Mammary epithelial cell (primary cell): ENCODE measurements at regions of chr1 and their contacts with region 1.

Region 1: DNA sequence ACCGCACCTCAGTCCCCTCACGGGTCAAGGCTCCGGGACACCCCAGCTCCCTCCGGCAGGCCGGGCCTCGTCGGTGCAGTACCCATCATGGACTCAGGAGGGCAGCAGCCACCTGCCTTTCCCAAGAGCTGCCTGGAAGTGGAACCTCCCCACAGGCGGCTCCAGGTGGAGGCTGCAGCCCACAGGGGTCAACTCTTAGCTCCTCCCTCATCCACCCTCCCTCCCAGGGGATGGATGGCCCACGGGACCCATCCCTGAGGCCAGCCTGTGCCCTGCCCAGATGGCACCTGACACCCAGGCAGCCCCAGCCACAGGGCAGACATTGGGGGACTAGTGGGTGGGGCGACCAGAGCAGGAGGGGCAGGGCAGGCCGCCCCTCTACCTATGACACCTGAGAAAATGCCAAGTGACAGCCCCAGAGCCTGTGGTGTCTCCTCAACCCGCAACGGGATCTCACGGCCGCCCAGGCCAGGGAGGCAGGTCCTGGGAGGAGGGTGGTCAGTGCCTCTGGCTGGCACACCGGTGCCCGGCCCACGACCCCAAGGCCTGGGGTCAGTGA is 1.2 kb upstream of the ARHGEF16 start:
- DNase-seq: peak; percentile 56
- H3K4me3 ChIP-seq: no peak overlapping the region
- H3K27ac ChIP-seq: no peak overlapping the region
- H3K4me1 ChIP-seq: peaks cover 11% of the 10 kb centered on the region
- H3K27me3 ChIP-seq: no peaks in the 10 kb centered on the region
- CTCF ChIP-seq: peak; percentile 80 to 97

Region 2: GRCh38 chr1:3483801-3484444 is 30.6 kb after region 1 on chr1:
- CTCF ChIA-PET with region 1: interaction called, 23 read pairs
- dilution Hi-C with region 1: no loop called
- in situ Hi-C with region 1: loop called (anchors 5 kb)
- intact Hi-C with region 1: loop called (anchors 1 kb)
- DNase-seq: no peak
- H3K4me3 ChIP-seq: no peak overlapping the region
- H3K27ac ChIP-seq: no peak overlapping the region
- H3K4me1 ChIP-seq: peaks cover 16% of the 10 kb centered on the region
- H3K27me3 ChIP-seq: no peaks in the 10 kb centered on the region
- CTCF ChIP-seq: peak; percentile 82 to 97

Region 3: DNA sequence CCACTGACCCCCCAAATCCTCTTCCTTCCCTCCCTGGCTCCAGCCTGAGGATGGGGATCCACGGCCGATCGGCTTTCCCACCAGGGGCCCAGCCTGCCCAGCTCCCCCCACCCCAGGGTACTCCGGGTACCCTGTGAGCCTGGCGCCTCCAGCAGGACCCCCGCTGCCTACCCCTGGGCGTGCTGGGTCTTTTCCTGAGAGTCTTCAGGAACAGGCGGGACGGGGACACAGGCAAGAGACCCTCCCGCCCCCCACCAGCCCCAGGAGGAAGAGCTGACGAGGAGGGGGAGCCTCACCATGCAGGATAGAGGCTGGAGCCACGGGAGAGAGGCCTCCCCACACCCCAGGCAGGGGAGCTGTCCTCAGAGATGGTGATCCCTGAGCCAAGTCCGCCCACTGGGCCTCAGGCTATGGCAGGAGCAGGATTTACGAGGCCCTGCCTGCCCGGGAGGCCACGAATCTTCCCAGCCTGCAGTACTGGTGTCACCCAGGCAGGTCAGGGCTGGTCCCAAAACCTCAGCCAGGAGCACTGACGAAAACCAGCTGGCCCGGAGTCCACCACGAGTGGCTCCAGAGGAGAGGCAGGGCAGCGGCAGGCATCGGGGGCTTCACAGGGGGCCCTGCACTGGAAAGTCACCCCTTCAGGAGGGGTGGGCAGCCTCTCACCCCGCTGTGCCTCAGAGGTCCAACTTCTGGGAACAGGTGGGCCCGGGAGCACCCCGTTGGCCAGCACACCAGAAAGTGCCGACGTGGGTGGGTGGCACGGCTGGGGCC is 100.1 kb after region 1 on chr1:
- CTCF ChIA-PET with region 1: no interaction called
- dilution Hi-C with region 1: loop called (anchors 5 kb)
- in situ Hi-C with region 1: no loop called
- intact Hi-C with region 1: no loop called
- DNase-seq: peak; percentile 81
- H3K4me3 ChIP-seq: peak overlapping the region in 1 of 3 experiments; percentile 10
- H3K27ac ChIP-seq: no peak overlapping the region
- H3K4me1 ChIP-seq: peaks cover 30% of the 10 kb centered on the region
- H3K27me3 ChIP-seq: peaks cover 14% of the 10 kb centered on the region
- CTCF ChIP-seq: no peak

Region 4: GRCh38 chr1:3624200-3625136 is 171.2 kb after region 1 on chr1 and contains the start of gene TPRG1L:
- CTCF ChIA-PET with region 1: interaction called, 6 read pairs
- dilution Hi-C with region 1: no loop called
- in situ Hi-C with region 1: loop called in 1 of 2 experiments (anchors 10 kb)
- intact Hi-C with region 1: loop called (anchors 1 kb)
- DNase-seq: peak; percentile 94
- H3K4me3 ChIP-seq: peak within 1 kb of the TSS; percentile 75 to 100 (median 77)
- H3K27ac ChIP-seq: no peak within 1 kb of the TSS
- H3K4me1 ChIP-seq: peaks cover 18% of the 10 kb centered on the region
- H3K27me3 ChIP-seq: no peaks in the 10 kb centered on the region
- CTCF ChIP-seq: no peak
- total RNA-seq, gene TPRG1L: 44.2 to 48.6 TPM

Region 5: GRCh38 chr1:3740042-3740441 is 286.8 kb after region 1 on chr1:
- CTCF ChIA-PET with region 1: no interaction called
- dilution Hi-C with region 1: loop called (anchors 5 kb)
- in situ Hi-C with region 1: no loop called
- intact Hi-C with region 1: no loop called
- DNase-seq: no peak
- H3K4me3 ChIP-seq: no peak overlapping the region
- H3K27ac ChIP-seq: no peak overlapping the region
- H3K4me1 ChIP-seq: no peaks in the 10 kb centered on the region
- H3K27me3 ChIP-seq: no peaks in the 10 kb centered on the region
- CTCF ChIP-seq: no peak

Region 6: GRCh38 chr1:4108758-4109627 is 655.7 kb after region 1 on chr1:
- CTCF ChIA-PET with region 1: no interaction called
- dilution Hi-C with region 1: no loop called
- in situ Hi-C with region 1: no loop called
- intact Hi-C with region 1: no loop called
- DNase-seq: no peak
- H3K4me3 ChIP-seq: no peak overlapping the region
- H3K27ac ChIP-seq: no peak overlapping the region
- H3K4me1 ChIP-seq: no peaks in the 10 kb centered on the region
- H3K27me3 ChIP-seq: no peaks in the 10 kb centered on the region
- CTCF ChIP-seq: no peak